ENCODE measurements at regions of chr1 and their contacts with region 1.

Region 1: GRCh38 chr1:189158155-189158554 is 1319.5 kb downstream of the BRINP3 start:
- DNase-seq: no peak
- H3K4me3 ChIP-seq: no peak overlapping the region
- H3K27ac ChIP-seq: no peak overlapping the region
- H3K4me1 ChIP-seq: no peaks in the 10 kb centered on the region
- H3K27me3 ChIP-seq: no peaks in the 10 kb centered on the region
- CTCF ChIP-seq: no peak
- POLR2A ChIP-seq: no peak

Region 2: DNA sequence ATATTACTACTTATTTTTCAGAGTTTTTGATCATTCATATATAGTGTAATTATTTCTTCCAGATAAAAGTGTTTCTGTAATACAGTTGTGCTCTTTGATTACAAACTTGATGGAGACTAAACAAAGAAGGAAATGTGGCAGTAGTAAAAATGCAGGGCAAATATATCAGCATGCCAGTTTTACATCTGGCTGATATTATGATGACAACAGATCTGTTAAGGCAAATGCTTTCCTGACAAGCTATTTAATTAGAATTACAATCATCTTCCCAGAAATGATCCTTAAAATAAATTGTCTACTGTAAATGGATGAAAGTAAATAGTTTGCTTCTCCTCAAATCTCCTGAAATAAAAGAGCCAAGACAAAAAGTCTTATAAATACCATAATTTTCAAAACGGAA is 340.3 kb before region 1 on chr1:
- intact Hi-C with region 1: loop called (anchors 10 kb)
- DNase-seq: no peak
- H3K4me3 ChIP-seq: no peak overlapping the region
- H3K27ac ChIP-seq: no peak overlapping the region
- H3K4me1 ChIP-seq: no peaks in the 10 kb centered on the region
- H3K27me3 ChIP-seq: no peaks in the 10 kb centered on the region
- CTCF ChIP-seq: no peak
- POLR2A ChIP-seq: no peak